ENCODE measurements at regions of chr14 and their contacts with region 1.

Region 1: GRCh38 chr14:37116933-37117849 is 55.2 kb downstream of the SLC25A21 start:
- DNase-seq: peak; percentile 79
- H3K4me3 ChIP-seq: no peak overlapping the region
- H3K27ac ChIP-seq: peak overlapping the region; percentile 76
- H3K4me1 ChIP-seq: peaks cover 20% of the 10 kb centered on the region
- H3K27me3 ChIP-seq: no peaks in the 10 kb centered on the region
- CTCF ChIP-seq: peak; percentile 19 to 43
- POLR2A ChIP-seq: no peak

Region 2: GRCh38 chr14:36070031-36070719 is 1047.0 kb before region 1 on chr14:
- CTCF ChIA-PET with region 1: interaction called, 14 read pairs
- POLR2A ChIA-PET with region 1: no interaction called
- dilution Hi-C with region 1: no loop called
- intact Hi-C with region 1: no loop called
- DNase-seq: peak; percentile 47
- H3K4me3 ChIP-seq: no peak overlapping the region
- H3K27ac ChIP-seq: no peak overlapping the region
- H3K4me1 ChIP-seq: no peaks in the 10 kb centered on the region
- H3K27me3 ChIP-seq: peaks cover 0 to 2% of the 10 kb centered on the region in 2 experiments
- CTCF ChIP-seq: peak; percentile 69 to 79
- POLR2A ChIP-seq: no peak

Region 3: GRCh38 chr14:36505181-36505815 is 611.9 kb before region 1 on chr14:
- CTCF ChIA-PET with region 1: no interaction called
- POLR2A ChIA-PET with region 1: no interaction called
- dilution Hi-C with region 1: no loop called
- intact Hi-C with region 1: no loop called
- DNase-seq: no peak
- H3K4me3 ChIP-seq: no peak overlapping the region
- H3K27ac ChIP-seq: no peak overlapping the region
- H3K4me1 ChIP-seq: no peaks in the 10 kb centered on the region
- H3K27me3 ChIP-seq: peaks cover 76 to 93% of the 10 kb centered on the region in 2 experiments
- CTCF ChIP-seq: no peak
- POLR2A ChIP-seq: no peak

Region 4: DNA sequence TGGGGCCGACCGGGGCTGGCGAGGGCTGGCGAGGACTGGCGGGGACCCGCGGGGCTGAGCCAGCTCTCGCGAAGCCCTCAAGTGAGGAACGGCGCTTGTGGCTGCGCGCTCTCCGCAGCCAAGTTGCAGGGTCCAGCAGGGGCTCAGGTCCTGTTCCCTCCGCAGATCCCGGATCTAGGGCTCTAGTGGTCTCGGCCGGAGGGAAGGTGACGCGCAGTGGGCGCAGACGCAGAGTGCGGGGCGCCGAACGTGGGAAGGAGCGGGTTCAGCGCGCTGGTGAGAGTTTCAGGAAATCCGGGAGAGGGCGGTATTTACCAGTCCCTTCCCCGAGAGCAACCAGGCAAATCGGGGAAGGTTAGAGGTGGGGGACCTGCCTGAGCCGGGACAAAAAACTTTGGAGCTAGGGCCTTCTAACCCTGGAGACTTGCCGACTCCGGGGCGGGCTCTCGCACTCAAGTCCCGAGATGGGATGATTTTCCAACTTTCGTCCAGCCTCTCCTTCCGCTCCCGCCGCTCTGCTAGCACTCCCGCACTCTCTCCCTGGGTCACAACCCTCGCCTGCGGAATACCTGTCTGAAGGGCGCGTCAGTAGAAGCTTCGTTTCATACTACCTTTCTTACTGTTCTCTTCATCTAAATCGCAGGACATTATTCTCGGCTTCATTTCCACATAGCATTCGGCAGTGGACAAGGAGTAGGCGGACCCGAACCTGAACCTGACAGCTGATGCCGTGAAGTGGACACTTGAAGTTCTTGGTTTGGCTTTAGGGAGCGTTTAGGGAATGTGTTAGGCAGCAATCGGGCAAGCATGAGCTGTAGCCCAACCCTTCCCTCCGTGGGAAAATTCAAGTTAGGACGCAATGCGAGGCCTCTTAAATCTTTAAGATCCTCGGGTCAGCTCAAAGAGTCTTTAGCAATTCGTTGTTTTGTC is 469.1 kb before region 1 on chr14:
- CTCF ChIA-PET with region 1: interaction called, 36 read pairs
- POLR2A ChIA-PET with region 1: no interaction called
- dilution Hi-C with region 1: no loop called
- intact Hi-C with region 1: loop called (anchors 1 kb)
- DNase-seq: peak; percentile 40
- H3K4me3 ChIP-seq: peak overlapping the region in 2 of 3 experiments; percentile 31 to 35
- H3K27ac ChIP-seq: no peak overlapping the region
- H3K4me1 ChIP-seq: peaks cover 10% of the 10 kb centered on the region
- H3K27me3 ChIP-seq: peaks cover 59 to 91% of the 10 kb centered on the region in 2 experiments
- CTCF ChIP-seq: peak; percentile 42 to 47
- POLR2A ChIP-seq: no peak

Region 5: GRCh38 chr14:36747411-36748184 is 369.6 kb before region 1 on chr14:
- CTCF ChIA-PET with region 1: interaction called, 6 read pairs
- POLR2A ChIA-PET with region 1: no interaction called
- dilution Hi-C with region 1: no loop called
- intact Hi-C with region 1: loop called (anchors 10 kb)
- DNase-seq: peak; percentile 14
- H3K4me3 ChIP-seq: no peak overlapping the region
- H3K27ac ChIP-seq: no peak overlapping the region
- H3K4me1 ChIP-seq: no peaks in the 10 kb centered on the region
- H3K27me3 ChIP-seq: peaks cover 0 to 7% of the 10 kb centered on the region in 2 experiments
- CTCF ChIP-seq: peak; percentile 52 to 54
- POLR2A ChIP-seq: no peak

Region 6: DNA sequence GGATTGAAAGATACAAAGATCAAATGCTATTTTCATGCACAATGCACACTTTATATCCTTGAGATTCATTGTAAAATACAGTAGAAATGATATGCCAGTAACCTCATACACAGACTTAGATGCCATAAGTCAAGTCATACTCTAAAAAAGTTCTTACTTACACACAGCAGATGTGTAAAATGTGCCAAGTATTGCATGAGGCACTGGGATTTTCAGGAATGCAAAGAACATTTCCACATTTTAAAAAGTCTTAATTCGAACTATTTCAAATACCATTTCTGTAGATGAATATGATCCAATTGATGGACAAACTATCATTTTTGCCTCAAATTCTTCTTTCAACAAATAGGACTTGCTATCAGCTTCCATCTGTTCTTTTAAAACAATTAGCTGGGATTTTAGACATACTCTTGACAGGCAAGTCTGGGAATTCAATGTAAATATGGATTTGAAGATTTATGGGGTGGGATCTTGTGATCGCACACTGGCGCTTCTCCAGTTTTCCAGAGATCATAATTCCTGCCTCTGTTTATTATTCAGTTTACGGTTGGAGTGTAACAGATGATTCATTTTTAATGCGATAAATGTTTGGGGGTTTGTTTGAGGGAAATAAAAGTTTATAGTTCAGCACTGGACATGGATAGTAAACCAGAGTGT is 271.7 kb before region 1 on chr14:
- CTCF ChIA-PET with region 1: no interaction called
- POLR2A ChIA-PET with region 1: no interaction called
- dilution Hi-C with region 1: no loop called
- intact Hi-C with region 1: no loop called
- DNase-seq: no peak
- H3K4me3 ChIP-seq: no peak overlapping the region
- H3K27ac ChIP-seq: no peak overlapping the region
- H3K4me1 ChIP-seq: no peaks in the 10 kb centered on the region
- H3K27me3 ChIP-seq: no peaks in the 10 kb centered on the region
- CTCF ChIP-seq: no peak
- POLR2A ChIP-seq: no peak

Region 7: DNA sequence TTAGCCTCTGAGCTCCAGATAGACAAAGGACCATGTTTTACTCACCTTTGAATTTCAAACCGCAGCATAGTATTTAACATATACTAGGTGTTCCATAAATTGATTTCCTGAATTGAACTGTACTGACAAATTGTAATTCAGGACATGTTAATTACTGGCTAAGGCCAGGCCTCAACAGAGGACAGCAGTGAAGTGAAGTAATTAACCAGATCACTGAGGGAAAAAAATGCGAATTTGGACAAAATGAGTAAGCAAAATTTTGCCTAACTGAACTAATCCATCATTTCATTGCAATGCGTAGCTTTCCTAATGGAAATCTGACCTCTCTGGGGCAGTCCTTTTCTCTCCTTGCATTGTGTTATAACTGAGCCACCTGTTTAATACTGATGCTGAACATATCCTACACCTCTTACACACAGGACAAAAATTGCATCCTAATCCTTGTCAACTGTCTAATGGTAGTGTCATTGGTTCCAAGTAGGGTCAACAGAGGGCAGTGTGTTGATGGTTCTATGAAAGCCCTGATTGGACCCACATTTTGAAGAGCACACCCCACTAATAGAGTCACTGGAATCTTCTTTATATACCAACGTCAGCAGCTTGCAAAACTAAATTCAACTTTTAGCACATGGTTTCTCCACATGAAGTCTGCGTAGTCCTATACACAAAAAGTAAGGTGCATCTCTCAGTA is 93.2 kb before region 1 on chr14:
- CTCF ChIA-PET with region 1: interaction called, 12 read pairs
- POLR2A ChIA-PET with region 1: no interaction called
- dilution Hi-C with region 1: no loop called
- intact Hi-C with region 1: no loop called
- DNase-seq: no peak
- H3K4me3 ChIP-seq: no peak overlapping the region
- H3K27ac ChIP-seq: no peak overlapping the region
- H3K4me1 ChIP-seq: no peaks in the 10 kb centered on the region
- H3K27me3 ChIP-seq: no peaks in the 10 kb centered on the region
- CTCF ChIP-seq: no peak
- POLR2A ChIP-seq: no peak

Region 8: GRCh38 chr14:37048666-37049071 is 68.5 kb before region 1 on chr14:
- CTCF ChIA-PET with region 1: interaction called, 6 read pairs
- POLR2A ChIA-PET with region 1: no interaction called
- dilution Hi-C with region 1: no loop called
- intact Hi-C with region 1: loop called (anchors 2 kb)
- DNase-seq: peak; percentile 33
- H3K4me3 ChIP-seq: no peak overlapping the region
- H3K27ac ChIP-seq: no peak overlapping the region
- H3K4me1 ChIP-seq: peaks cover 39% of the 10 kb centered on the region
- H3K27me3 ChIP-seq: no peaks in the 10 kb centered on the region
- CTCF ChIP-seq: no peak
- POLR2A ChIP-seq: no peak